ENCODE measurements at regions of chr2 and their contacts with region 1.

Region 1: DNA sequence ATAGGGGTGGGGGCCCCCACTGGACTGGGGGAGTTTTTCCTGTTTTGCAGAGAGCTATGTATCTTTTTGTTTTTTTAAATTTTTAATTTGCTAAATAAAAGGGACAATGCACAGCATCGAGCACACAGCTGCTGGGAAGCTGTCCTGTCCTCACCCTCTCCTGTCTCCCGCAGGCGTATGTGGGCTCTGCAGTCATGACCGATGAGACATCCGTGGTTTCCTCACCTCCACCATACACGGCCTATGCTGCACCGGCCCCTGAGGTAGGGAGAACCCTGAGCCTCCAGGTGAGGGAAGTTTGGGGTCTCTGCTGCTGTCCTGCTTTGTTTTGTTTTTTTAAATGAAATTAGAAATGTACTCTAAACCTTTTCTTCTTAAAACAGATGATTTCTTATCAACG is 27.6 kb downstream of the PLEKHB2 start:
- DNase-seq: no peak
- ATAC-seq: no peak
- H3K4me3 ChIP-seq: no peak overlapping the region
- H3K27ac ChIP-seq: no peak overlapping the region
- H3K4me1 ChIP-seq: no peaks in the 10 kb centered on the region
- H3K27me3 ChIP-seq: no peaks in the 10 kb centered on the region
- CTCF ChIP-seq: no peak

Region 2: GRCh38 chr2:131040661-131041401 is 91.9 kb before region 1 on chr2:
- intact Hi-C with region 1: loop called in 1 of 10 experiments (anchors 10 kb)
- DNase-seq: no peak
- ATAC-seq: no peak
- H3K4me3 ChIP-seq: peak overlapping the region in 4 of 10 donors; percentile 14 to 40 (median 34)
- H3K27ac ChIP-seq: no peak overlapping the region
- H3K4me1 ChIP-seq: peaks cover 0 to 13% (median 9%) of the 10 kb centered on the region in 9 donors
- H3K27me3 ChIP-seq: peaks cover 4 to 50% (median 34%) of the 10 kb centered on the region in 7 donors
- CTCF ChIP-seq: peak in 3 of 9 donors; percentile 6 to 12 (median 11)